ENCODE measurements at regions of chr6 and their contacts with region 1.

Region 1: DNA sequence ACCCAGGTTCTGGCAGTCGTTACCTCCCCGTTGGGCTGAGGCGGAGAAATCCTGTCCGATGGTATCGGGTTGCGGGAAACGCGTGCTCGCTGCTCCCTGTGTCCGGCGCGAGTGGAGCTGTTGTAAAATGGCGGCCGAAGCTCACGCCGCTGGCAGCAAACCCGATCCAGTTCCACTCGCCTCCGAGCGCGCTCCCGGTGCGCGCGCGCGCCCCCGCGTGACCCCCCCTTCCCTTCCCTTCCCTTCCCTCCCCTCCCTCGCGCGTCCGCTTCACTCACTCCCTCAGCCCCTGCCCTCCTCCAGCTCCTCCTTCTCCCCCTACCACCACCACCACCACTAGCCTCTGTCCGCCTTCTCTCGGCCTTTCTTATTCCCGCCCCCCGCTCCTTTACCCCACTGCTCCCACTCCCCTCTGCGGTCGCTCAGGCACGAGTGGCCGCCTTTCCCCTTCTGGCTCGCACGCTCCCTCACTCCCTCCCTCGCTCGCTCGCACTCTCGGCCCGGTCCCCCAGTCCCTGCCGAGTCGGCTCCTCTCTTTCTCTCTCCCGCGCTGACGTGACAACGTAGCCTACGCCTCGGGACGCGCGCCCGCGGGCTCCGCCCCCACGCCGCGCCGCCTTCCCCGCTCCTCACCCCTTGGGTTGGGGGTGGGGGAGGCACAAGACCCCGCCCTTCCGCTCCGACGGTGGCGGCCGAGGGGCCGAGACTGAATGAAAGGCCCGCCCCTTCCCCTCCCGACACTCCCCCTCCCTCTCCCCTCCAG is at the start of gene SYNCRIP:
- DNase-seq: peak; percentile 51 to 97
- ATAC-seq: peak; percentile 76 to 85
- H3K4me3 ChIP-seq: peak within 1 kb of the TSS; percentile 79
- H3K27ac ChIP-seq: peak within 1 kb of the TSS; percentile 99 to 100
- H3K4me1 ChIP-seq: peaks cover 30% of the 10 kb centered on the region; the same call in 2 of the 3 replicates
- CTCF ChIP-seq: no peak
- EP300 ChIP-seq: no peak
- POLR2A ChIP-seq: peak; percentile 66
- RAD21 ChIP-seq: 0 out of 5 replicates have a peak, but pooled peaks of 1 of the 2 experiments have one; percentile 16
- polyA plus RNA-seq, gene SYNCRIP: 47.5 and 60.6 TPM in 2 replicates

Region 2: DNA sequence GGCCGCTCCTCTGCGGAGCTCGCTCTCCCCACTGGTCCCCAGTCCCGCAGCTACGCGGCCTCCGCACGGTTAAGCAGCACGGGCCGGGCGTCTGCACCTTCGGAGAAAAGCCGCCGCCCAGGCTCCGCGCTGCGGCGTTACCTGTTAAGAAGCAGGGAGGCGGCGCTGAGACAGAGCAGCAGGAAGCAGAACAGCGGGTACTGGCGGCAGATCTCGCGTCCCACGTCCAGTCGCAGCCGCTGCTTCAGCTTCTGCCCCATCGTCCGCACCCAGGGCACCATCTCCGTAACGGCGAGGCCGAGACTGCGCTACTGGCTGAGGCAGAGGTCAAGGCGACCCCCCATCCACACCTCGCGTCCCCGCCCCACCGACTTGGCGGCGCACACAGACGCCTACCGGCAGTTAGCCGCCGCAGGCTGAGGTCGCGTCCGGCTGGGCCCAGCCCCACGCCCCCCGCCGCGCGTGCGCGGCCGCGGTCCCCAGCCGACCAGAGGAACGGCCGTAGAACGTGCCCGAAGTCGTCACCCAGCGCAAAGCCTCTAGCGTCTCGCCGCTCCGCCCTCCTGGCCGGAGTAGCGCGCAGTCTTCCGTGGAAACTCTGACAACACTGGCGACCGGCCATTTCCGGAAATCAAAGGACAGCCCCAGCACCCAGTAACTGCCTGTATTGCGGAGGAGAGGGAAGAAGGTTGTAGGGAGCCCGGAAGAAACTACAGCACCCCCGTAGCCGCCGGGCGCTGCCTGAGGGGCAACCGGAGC is 49.3 kb before region 1 on chr6 and contains the start of gene SNX14:
- CTCF ChIA-PET with region 1: interaction called, 3 read pairs
- POLR2A ChIA-PET with region 1: interaction called, 25 read pairs
- DNase-seq: peak; percentile 76 to 92
- ATAC-seq: peak; percentile 91 to 95
- H3K4me3 ChIP-seq: peak within 1 kb of the TSS; percentile 77
- H3K27ac ChIP-seq: peak within 1 kb of the TSS; percentile 95
- H3K4me1 ChIP-seq: peaks cover 16% of the 10 kb centered on the region
- CTCF ChIP-seq: no peak
- EP300 ChIP-seq: no peak
- POLR2A ChIP-seq: peak; percentile 82
- RAD21 ChIP-seq: peak in 1 of 2 experiments; percentile 24; a peak in 1 of 5 replicates
- polyA plus RNA-seq, gene SNX14: 79.8 and 113 TPM in 2 replicates

Region 3: DNA sequence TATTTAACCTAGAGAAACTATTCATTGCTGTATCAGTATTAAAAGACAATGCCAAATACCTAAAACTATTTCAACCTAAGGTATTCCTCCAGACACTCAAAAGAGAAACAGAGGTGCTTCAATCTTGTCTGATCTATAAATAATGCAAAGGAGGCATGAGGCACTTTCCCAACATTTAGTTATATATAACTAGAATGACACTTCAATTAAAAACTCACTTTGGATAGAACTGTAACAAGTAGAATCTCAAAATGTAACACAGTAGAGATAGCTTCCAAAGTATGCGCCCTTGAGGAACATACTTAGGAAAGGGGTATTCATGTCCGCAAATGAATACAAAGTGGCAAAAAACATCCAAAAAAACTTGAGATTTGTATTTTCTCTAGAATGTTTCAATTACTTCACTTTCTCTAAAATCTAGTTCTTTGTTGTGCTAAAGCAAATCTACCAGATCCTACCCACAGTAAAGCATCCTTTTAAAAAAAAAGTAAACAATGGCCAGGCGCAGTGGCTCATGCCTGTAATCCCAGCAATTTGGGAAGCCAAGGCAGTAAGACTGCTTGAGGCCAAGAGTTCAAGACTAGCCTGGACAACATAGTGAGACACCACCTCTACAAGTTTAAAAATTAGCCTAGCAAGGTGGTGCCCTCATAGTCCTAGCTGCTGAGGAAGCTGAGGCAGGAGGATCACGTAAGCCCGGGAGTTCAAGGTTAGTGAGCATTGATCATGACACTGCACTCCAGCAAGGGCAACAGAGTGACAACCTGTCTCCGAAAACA is 10.6 kb before region 1 on chr6:
- CTCF ChIA-PET with region 1: interaction called, 3 read pairs
- POLR2A ChIA-PET with region 1: interaction called, 16 read pairs
- DNase-seq: no peak
- ATAC-seq: no peak
- H3K4me3 ChIP-seq: no peak overlapping the region
- H3K27ac ChIP-seq: no peak overlapping the region
- H3K4me1 ChIP-seq: peaks cover 18% of the 10 kb centered on the region; the same call in 2 of the 3 replicates
- CTCF ChIP-seq: no peak
- EP300 ChIP-seq: no peak
- POLR2A ChIP-seq: no peak
- RAD21 ChIP-seq: no peak

Region 4: DNA sequence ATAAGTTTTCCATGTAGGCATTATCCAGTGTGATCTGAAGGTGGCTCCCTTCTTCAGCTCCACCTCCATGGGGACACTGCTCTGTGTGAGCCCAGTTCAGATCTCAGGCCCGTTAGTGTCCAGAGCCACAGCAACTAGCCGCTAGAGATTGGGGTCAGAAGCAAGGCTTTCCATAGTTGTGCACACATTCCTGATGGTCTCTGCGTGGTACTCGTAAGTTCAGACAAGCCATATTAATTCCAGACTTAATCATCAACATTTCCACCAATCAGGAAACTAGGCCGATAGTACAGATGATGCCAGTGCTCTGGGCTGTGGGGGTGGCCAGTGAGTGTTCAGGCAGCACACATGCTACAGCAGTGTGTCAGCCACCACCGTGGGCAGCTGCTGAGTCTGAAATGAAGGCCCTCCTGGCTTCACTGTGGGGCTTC is 17.2 kb after region 1 on chr6:
- CTCF ChIA-PET with region 1: interaction called, 4 read pairs
- POLR2A ChIA-PET with region 1: interaction called, 20 read pairs
- DNase-seq: peak; percentile 40 to 70
- ATAC-seq: peak; percentile 99
- H3K4me3 ChIP-seq: no peak overlapping the region
- H3K27ac ChIP-seq: peak overlapping the region; percentile 64 to 77
- H3K4me1 ChIP-seq: peaks cover 8% of the 10 kb centered on the region; the same call in 1 of the 3 replicates
- CTCF ChIP-seq: no peak; the same call in 2 of the 3 replicates
- EP300 ChIP-seq: no peak
- POLR2A ChIP-seq: no peak
- RAD21 ChIP-seq: peak in 1 of 2 experiments; percentile 25; a peak in 1 of 5 replicates

Region 5: GRCh38 chr6:85669735-85670194 is 26.8 kb after region 1 on chr6:
- CTCF ChIA-PET with region 1: interaction called, 4 read pairs
- POLR2A ChIA-PET with region 1: interaction called, 378 read pairs
- DNase-seq: no peak
- ATAC-seq: peak; percentile 30 to 57
- H3K4me3 ChIP-seq: no peak overlapping the region
- H3K27ac ChIP-seq: no peak overlapping the region
- H3K4me1 ChIP-seq: peaks cover 25% of the 10 kb centered on the region; the same call in 2 of the 3 replicates
- CTCF ChIP-seq: no peak
- EP300 ChIP-seq: no peak
- POLR2A ChIP-seq: no peak
- RAD21 ChIP-seq: no peak

Region 6: DNA sequence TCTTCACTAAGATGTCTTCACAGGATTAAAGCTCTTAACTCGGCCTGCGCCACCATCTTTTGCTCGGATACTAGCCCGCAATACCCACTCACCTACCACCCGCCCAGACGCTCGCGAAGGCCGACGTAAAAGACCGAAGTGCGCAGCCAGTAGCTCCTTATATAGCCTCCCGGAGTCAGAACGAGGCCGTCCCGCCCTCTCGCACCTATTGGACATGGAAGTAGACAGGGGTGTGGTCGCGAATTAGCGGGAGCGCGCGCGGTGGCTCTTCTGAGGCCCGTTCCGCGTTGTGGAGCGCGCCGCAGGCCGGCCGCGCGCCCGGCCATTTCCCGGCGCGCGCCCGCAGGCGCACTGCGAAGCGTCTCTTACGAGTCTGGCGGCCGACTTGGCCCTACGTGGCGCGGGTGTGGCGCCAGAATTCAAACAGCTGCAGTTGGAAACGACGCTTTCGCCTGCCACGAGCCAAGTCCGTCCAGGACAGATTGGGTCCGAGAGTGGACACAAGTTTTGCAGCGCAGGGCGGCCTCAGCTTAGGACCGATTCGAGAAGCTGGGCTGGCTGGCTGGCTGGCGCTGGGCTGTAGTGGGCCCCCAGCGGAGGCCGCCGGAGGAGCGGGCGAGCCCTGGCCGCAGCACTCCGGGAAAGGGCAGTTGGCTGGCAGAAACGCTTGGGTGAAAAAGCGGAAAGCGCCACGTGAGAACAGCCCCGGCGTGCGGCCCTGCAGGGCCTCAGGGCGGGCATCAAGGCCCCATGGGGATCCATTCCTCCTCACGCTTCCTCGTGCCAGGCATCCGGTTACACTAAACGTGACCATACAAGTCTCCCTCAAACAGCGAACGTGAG is 35.9 kb after region 1 on chr6:
- CTCF ChIA-PET with region 1: no interaction called
- POLR2A ChIA-PET with region 1: interaction called, 378 read pairs
- DNase-seq: peak; percentile 80 to 98
- ATAC-seq: peak; percentile 87 to 89
- H3K4me3 ChIP-seq: peak overlapping the region; percentile 97
- H3K27ac ChIP-seq: peak overlapping the region; percentile 94 to 97
- H3K4me1 ChIP-seq: peaks cover 23% of the 10 kb centered on the region; the same call in 2 of the 3 replicates
- CTCF ChIP-seq: no peak
- EP300 ChIP-seq: no peak
- POLR2A ChIP-seq: peak; percentile 99
- RAD21 ChIP-seq: no peak

Measured in A549 (cell line).